SK-N-SH (cell line): ENCODE measurements at regions of chr17 and their contacts with region 1.

Region 1: DNA sequence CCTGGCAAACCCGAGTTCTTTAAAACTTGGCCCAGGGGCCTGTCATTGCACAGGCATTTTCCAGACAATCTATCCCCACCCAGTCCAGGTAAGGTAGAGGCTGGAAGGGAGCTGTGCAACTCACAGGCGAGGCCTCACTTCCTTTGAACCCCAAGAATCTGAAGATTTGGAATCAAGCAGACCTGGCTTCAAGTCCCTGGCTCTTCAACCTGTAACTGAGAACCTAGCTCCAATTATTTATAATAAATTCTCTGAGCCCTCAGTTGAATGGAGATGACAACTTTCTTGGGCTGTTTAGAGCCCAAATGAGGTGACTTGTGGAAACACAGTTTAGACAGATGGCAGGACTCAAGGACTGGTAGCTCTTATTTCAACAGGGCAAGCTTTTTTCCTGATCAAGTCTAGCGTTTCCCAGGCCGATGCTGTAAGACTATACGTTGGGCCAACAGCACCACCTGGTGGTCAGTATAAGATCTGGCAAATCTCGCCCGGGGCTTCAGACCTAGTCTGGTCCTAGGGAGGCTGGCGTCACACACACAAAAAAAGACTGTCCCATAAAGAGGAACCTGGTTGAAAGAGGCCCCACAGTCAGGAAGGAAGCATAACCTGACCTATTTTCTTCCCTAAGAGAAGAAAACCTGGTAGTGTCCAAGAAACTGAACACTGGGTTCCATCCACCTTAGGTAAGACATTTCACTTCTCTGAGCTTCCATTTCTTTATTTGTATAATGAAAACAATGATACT is 117.9 kb downstream of the C17orf67 start:
- DNase-seq: peak; percentile 80
- H3K4me3 ChIP-seq: no peak overlapping the region
- H3K27ac ChIP-seq: no peak overlapping the region
- H3K4me1 ChIP-seq: no peaks in the 10 kb centered on the region
- H3K27me3 ChIP-seq: no peaks in the 10 kb centered on the region; the same call in 1 of the 2 replicates
- CTCF ChIP-seq: peak; percentile 97
- EP300 ChIP-seq: no peak
- RAD21 ChIP-seq: peak; percentile 94

Region 2: DNA sequence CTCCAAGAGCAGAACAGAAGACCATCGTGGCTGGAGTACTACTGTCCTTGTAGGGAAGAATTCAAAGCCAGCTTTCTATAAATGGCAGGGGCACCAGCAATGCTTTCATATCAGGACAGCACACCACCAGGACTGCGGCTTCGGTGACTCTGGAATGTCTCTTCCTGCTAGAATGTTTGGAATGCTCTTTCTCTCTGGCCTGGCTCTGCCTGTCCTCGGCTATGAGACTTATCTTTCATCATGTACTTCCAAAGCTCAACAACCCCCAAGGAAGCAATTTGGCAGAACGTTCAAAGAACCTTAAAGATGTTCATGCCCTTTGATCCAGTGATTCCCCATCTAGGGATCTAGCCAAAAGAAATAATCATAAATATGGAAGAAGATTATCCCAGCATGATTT is 174.9 kb before region 1 on chr17:
- CTCF ChIA-PET with region 1: no interaction called
- POLR2A ChIA-PET with region 1: no interaction called
- DNase-seq: no peak
- H3K4me3 ChIP-seq: no peak overlapping the region
- H3K27ac ChIP-seq: no peak overlapping the region
- H3K4me1 ChIP-seq: no peaks in the 10 kb centered on the region
- H3K27me3 ChIP-seq: no peaks in the 10 kb centered on the region
- CTCF ChIP-seq: no peak
- EP300 ChIP-seq: no peak
- RAD21 ChIP-seq: no peak

Region 3: DNA sequence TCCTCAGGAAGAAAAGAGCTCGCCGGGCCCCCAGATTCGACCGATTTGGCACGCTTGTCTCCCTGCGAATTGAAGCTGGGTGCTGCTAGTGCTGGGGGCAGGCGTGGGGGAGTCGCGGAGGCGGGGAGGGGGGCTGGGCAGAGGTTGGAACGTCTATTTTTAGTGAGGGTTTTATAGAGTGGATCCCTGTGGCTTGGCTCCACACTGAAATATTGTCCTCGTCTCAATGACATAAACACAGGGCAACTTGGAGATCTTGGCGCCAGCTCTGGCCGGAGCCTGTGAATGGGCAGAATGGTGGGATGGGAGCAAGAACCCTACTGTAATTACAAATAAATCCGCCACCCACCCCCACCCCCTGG is 138.0 kb before region 1 on chr17:
- CTCF ChIA-PET with region 1: interaction called, 35 read pairs
- POLR2A ChIA-PET with region 1: no interaction called
- DNase-seq: no peak
- H3K4me3 ChIP-seq: no peak overlapping the region
- H3K27ac ChIP-seq: no peak overlapping the region
- H3K4me1 ChIP-seq: no peaks in the 10 kb centered on the region
- H3K27me3 ChIP-seq: peaks cover 62% of the 10 kb centered on the region
- CTCF ChIP-seq: no peak
- EP300 ChIP-seq: no peak
- RAD21 ChIP-seq: no peak

Region 4: GRCh38 chr17:56610321-56610720 is 105.5 kb before region 1 on chr17:
- CTCF ChIA-PET with region 1: interaction called, 15 read pairs
- POLR2A ChIA-PET with region 1: no interaction called
- DNase-seq: no peak
- H3K4me3 ChIP-seq: no peak overlapping the region
- H3K27ac ChIP-seq: no peak overlapping the region
- H3K4me1 ChIP-seq: no peaks in the 10 kb centered on the region
- H3K27me3 ChIP-seq: no peaks in the 10 kb centered on the region
- CTCF ChIP-seq: no peak
- EP300 ChIP-seq: no peak
- RAD21 ChIP-seq: no peak

Region 5: GRCh38 chr17:56699186-56699895 is 16.4 kb before region 1 on chr17:
- CTCF ChIA-PET with region 1: interaction called, 75 read pairs
- POLR2A ChIA-PET with region 1: no interaction called
- DNase-seq: peak; percentile 38
- H3K4me3 ChIP-seq: peak overlapping the region; percentile 2 to 13; a peak in 2 of 4 replicates
- H3K27ac ChIP-seq: peak overlapping the region; percentile 41 to 80; a peak in 3 of 4 replicates
- H3K4me1 ChIP-seq: peaks cover 0 to 12% of the 10 kb centered on the region in 2 experiments; a peak in 1 of 4 replicates
- H3K27me3 ChIP-seq: no peaks in the 10 kb centered on the region
- CTCF ChIP-seq: no peak
- EP300 ChIP-seq: peak in 1 of 2 experiments; percentile 95; a peak in 2 of 4 replicates
- RAD21 ChIP-seq: no peak

Region 6: DNA sequence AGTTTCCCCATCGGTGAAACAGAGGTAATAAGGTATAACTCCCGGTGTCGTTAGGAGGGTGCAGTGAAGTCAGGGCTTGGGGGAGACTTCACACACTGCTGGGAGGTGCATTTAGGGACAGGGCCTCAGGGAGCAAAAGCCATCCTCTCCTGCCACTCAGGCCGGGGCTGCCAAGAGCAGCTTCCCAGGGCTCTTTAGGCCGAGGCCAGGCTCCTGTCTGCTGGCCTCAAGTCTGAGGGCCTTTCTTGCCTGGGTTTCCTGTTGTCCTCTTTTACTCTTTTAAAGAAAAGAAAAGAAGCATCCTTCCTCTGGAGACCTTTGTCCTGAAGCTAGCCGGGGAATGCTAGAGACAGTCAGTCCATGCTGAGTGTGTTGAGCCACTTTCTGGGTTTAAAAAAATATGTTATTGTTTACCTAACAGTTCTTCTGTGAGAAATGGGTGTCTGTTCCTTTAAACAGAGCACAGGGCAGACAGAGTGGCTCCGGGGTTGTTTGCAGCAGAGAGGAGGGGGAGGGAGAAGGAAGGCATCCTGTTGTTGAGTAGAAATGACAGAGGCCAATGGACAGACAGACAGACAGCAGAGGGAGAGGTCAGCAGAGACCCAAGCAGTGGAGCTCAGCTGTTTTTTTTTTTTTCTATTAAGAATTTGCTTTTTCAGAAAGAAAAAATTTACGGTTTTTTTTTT is 38.9 kb after region 1 on chr17:
- CTCF ChIA-PET with region 1: interaction called, 32 read pairs
- POLR2A ChIA-PET with region 1: no interaction called
- DNase-seq: peak; percentile 60
- H3K4me3 ChIP-seq: no peak overlapping the region
- H3K27ac ChIP-seq: peak overlapping the region; percentile 2 to 73; a peak in 3 of 4 replicates
- H3K4me1 ChIP-seq: peaks cover 3 to 18% of the 10 kb centered on the region in 2 experiments; a peak in 3 of 4 replicates
- H3K27me3 ChIP-seq: no peaks in the 10 kb centered on the region
- CTCF ChIP-seq: no peak
- EP300 ChIP-seq: peak in 1 of 2 experiments; percentile 37; a peak in 1 of 4 replicates
- RAD21 ChIP-seq: no peak

Region 7: GRCh38 chr17:56867948-56868376 is 152.2 kb after region 1 on chr17:
- CTCF ChIA-PET with region 1: no interaction called
- POLR2A ChIA-PET with region 1: no interaction called
- DNase-seq: no peak
- H3K4me3 ChIP-seq: no peak overlapping the region
- H3K27ac ChIP-seq: peak overlapping the region in 1 of 2 experiments; percentile 59; a peak in 3 of 4 replicates
- H3K4me1 ChIP-seq: peaks cover 0 to 5% of the 10 kb centered on the region in 2 experiments; a peak in 2 of 4 replicates
- H3K27me3 ChIP-seq: no peaks in the 10 kb centered on the region
- CTCF ChIP-seq: no peak
- EP300 ChIP-seq: peak in 1 of 2 experiments; percentile 62; a peak in 1 of 4 replicates
- RAD21 ChIP-seq: no peak

Region 8: DNA sequence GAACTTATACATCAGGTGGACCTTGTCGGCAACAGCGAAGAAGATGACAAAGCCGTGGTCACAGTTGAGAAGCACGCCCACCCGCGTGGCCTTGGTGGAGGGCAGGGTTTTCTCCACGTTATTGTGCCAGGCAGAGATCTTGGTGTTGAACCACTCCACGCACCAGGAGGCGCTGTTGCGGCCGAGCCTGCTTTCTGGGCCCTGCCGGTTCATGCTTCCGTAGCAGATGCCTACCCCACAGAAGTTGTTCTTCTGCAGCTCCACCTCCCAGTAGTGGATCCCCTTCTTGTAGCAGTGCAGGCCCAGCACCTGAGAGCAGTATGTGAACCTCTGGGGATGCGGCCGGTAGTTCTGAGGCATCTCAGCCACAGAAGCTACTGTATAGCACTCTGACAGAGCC is 176.0 kb after region 1 on chr17:
- CTCF ChIA-PET with region 1: no interaction called
- POLR2A ChIA-PET with region 1: no interaction called
- DNase-seq: peak; percentile 52
- H3K4me3 ChIP-seq: no peak overlapping the region
- H3K27ac ChIP-seq: no peak overlapping the region
- H3K4me1 ChIP-seq: peaks cover 0 to 3% of the 10 kb centered on the region in 2 experiments; a peak in 1 of 4 replicates
- H3K27me3 ChIP-seq: no peaks in the 10 kb centered on the region
- CTCF ChIP-seq: peak; percentile 53
- EP300 ChIP-seq: no peak
- RAD21 ChIP-seq: peak; percentile 6; the same call in 1 of the 2 replicates